GM12878 (cell line): ENCODE measurements at regions of chr5 and their contacts with region 1.

Region 1: GRCh38 chr5:107395632-107396350 is 274.9 kb downstream of the EFNA5 start:
- DNase-seq: peak; percentile 57
- ATAC-seq: peak; percentile 83
- H3K4me3 ChIP-seq: no peak overlapping the region
- H3K27ac ChIP-seq: no peak overlapping the region
- H3K4me1 ChIP-seq: peaks cover 8% of the 10 kb centered on the region; the same call in 1 of the 2 replicates
- H3K27me3 ChIP-seq: no peaks in the 10 kb centered on the region
- CTCF ChIP-seq: no peak
- EP300 ChIP-seq: peak; percentile 62 to 68; a peak in 3 of 4 replicates
- POLR2A ChIP-seq: no peak
- RAD21 ChIP-seq: no peak

Region 2: DNA sequence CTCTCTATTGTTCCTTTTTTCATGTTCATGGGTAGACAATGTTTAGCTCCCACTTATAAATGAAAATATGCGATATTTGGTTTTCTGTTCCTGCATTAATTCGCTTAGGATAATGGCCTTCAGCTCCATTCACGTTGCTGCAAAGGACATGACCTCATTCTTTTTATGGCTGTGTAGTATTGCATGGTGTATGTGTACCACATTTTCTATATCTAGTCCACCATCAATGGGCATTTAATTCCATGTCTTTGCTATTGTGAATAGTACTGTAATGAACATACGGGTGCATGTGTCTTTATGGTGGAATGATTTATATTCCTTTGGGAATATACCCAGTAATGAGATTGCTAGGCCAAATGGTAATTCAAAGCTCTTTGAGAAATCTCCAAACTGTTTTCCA is 117.0 kb before region 1 on chr5:
- CTCF ChIA-PET with region 1: no interaction called
- POLR2A ChIA-PET with region 1: no interaction called
- RAD21 ChIA-PET with region 1: no interaction called
- SMC1A ChIA-PET with region 1: no interaction called
- in situ Hi-C with region 1: no loop called
- intact Hi-C with region 1: no loop called
- DNase-seq: no peak
- ATAC-seq: no peak
- H3K4me3 ChIP-seq: no peak overlapping the region
- H3K27ac ChIP-seq: no peak overlapping the region
- H3K4me1 ChIP-seq: no peaks in the 10 kb centered on the region
- H3K27me3 ChIP-seq: peaks cover 0 to 5% of the 10 kb centered on the region in 2 experiments; a peak in 2 of 4 replicates
- CTCF ChIP-seq: no peak
- EP300 ChIP-seq: no peak
- POLR2A ChIP-seq: no peak
- RAD21 ChIP-seq: no peak

Region 3: GRCh38 chr5:107365320-107366109 is 30.3 kb before region 1 on chr5:
- CTCF ChIA-PET with region 1: interaction called, 24 read pairs
- POLR2A ChIA-PET with region 1: no interaction called
- RAD21 ChIA-PET with region 1: interaction called, 42 read pairs
- SMC1A ChIA-PET with region 1: interaction called, 50 read pairs
- in situ Hi-C with region 1: no loop called
- intact Hi-C with region 1: no loop called
- DNase-seq: peak; percentile 92
- ATAC-seq: peak; percentile 81
- H3K4me3 ChIP-seq: 0 out of 2 replicates have a peak overlapping the region, but pooled peaks have one; percentile 6
- H3K27ac ChIP-seq: peak overlapping the region; percentile 47
- H3K4me1 ChIP-seq: peaks cover 21% of the 10 kb centered on the region
- H3K27me3 ChIP-seq: no peaks in the 10 kb centered on the region
- CTCF ChIP-seq: 0 out of 6 replicates have a peak, but pooled peaks of 1 of the 3 experiments have one; percentile 3
- EP300 ChIP-seq: peak; percentile 12 to 32; a peak in 2 of 4 replicates
- POLR2A ChIP-seq: no peak
- RAD21 ChIP-seq: no peak